Ovary (tissue), 10 donors: ENCODE measurements at regions of chr3 and their contacts with region 1.

Region 1: GRCh38 chr3:170584585-170585007 is 1.3 kb downstream of the SLC7A14 start:
- DNase-seq: peak; percentile 72 to 87 (median 80)
- H3K4me3 ChIP-seq: no peak overlapping the region
- H3K27ac ChIP-seq: no peak overlapping the region
- H3K4me1 ChIP-seq: peaks cover 8% of the 10 kb centered on the region
- H3K27me3 ChIP-seq: no peaks in the 10 kb centered on the region
- CTCF ChIP-seq: no peak
- EP300 ChIP-seq: no peak
- POLR2A ChIP-seq: no peak

Region 2: DNA sequence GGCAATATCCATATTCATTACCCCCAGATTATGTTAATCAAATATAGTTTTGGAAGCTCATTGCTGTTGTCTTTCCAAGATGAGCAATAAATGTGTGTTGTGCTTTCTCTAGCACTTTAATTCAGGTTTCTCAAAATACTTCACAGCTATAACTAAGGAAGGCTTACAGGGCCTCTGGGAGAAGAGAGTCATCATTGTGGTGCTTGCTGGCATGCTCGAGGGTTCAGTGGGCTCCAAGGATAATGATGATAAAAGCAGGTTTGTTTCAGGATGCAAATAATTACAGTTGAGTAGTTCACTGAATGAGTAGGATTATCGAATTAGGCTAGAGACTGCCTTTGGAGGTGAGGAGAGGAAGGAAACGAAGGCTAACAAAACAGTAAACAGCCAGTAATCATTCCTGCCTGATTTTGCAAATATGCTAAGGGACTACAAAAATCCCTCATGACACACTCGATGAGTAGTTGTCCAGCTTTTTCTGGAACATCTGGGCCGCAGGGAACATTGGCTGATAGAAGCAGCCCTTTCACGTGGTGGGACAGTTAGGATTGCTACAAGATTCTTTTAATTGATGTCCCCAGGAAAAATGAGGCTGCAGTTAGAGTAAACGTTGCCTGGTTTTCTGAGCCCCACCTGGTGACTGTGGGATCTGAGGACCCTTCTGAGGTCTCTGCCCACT is 52.8 kb before region 1 on chr3:
- intact Hi-C with region 1: loop called in 1 of 4 experiments (anchors 10 kb)
- DNase-seq: no peak
- H3K4me3 ChIP-seq: no peak overlapping the region
- H3K27ac ChIP-seq: no peak overlapping the region
- H3K4me1 ChIP-seq: peaks cover 2% of the 10 kb centered on the region
- H3K27me3 ChIP-seq: no peaks in the 10 kb centered on the region
- CTCF ChIP-seq: no peak
- EP300 ChIP-seq: no peak
- POLR2A ChIP-seq: no peak